SK-N-SH (cell line): ENCODE measurements at regions of chr2 and their contacts with region 1.

Region 1: DNA sequence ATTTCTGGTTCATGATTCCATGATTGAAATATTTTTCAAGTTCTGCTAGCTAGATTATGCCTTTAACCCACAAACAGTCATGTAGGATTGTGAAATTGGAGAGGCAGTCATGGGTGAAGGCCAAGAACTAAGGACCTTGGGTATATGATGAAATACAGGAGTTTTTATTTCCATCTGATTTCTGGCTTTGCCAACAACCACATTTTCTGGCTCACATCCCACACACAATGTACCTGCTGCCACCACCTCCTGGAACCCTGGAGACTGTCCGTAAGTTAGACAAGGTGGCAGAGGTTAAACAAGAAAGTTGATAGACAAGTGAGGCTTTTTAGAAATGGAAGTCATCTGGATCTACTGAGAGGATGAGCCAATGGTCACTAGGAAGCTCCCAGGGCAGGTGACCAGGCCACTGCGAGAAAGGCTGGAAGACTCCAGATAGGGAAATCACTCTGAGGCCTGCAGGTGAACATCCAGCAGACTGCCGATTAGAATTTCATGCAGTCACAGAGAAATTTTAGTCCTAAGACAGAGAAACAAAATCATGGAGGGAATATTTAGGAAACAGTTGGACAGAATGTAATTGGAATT is 402.0 kb downstream of the ALK start:
- DNase-seq: no peak
- H3K4me3 ChIP-seq: no peak overlapping the region
- H3K27ac ChIP-seq: peak overlapping the region in 1 of 2 experiments; percentile 100; a peak in 2 of 4 replicates
- H3K4me1 ChIP-seq: peaks cover 9 to 69% of the 10 kb centered on the region in 2 experiments; a peak in 2 of 4 replicates
- H3K27me3 ChIP-seq: no peaks in the 10 kb centered on the region
- CTCF ChIP-seq: no peak
- EP300 ChIP-seq: no peak
- RAD21 ChIP-seq: no peak

Region 2: DNA sequence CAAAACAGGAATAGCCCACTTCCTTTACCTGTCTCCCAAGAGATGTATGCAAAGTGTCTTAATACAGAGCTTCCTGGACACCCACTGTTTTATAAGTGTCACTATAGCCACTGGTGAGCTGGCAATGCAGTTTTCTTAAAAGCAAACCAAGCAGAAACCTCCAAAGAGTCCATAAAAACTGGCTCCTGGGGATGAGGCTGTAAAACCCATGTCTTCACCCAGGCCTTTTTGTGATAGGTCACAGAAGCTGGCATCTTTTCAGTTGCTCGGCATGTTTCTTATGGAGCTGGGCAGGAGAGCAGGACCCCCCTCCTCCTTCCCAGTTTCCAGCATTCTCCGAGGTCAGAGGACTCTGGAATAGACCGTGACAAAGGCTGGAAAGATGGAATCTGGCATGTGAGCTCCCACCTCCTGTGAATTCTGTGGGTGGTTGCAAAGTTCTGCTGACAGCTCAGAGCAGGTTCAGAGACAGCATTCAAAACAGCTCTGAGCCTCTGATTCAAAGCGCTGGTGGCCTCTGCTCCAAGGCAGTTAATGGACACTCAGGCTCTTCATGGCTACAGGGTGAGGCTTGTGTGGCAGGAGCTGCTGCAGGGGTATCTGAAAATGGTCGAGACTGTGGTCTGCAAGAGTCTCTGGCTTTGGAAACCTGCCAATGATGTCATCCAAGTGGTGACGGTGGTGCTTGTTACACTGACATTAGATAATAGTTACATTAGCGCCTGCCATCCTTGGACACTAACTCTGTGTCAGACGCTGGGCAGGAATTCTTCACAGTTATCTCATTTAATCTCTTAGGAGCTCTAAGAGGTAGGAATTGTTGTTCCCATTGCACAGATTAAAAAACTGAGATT is 120.8 kb before region 1 on chr2:
- CTCF ChIA-PET with region 1: interaction called, 3 read pairs
- POLR2A ChIA-PET with region 1: interaction called, 12 read pairs
- DNase-seq: peak; percentile 71
- H3K4me3 ChIP-seq: no peak overlapping the region
- H3K27ac ChIP-seq: peak overlapping the region in 1 of 2 experiments; percentile 93; a peak in 2 of 4 replicates
- H3K4me1 ChIP-seq: peaks cover 0 to 66% of the 10 kb centered on the region in 2 experiments; a peak in 2 of 4 replicates
- H3K27me3 ChIP-seq: no peaks in the 10 kb centered on the region
- CTCF ChIP-seq: no peak
- EP300 ChIP-seq: peak in 1 of 2 experiments; percentile 64; a peak in 1 of 4 replicates
- RAD21 ChIP-seq: peak; percentile 10

Region 3: GRCh38 chr2:29576231-29576630 is 56.8 kb after region 1 on chr2:
- CTCF ChIA-PET with region 1: interaction called, 23 read pairs
- POLR2A ChIA-PET with region 1: interaction called, 26 read pairs
- DNase-seq: no peak
- H3K4me3 ChIP-seq: no peak overlapping the region
- H3K27ac ChIP-seq: peak overlapping the region in 1 of 2 experiments; percentile 100; a peak in 2 of 4 replicates
- H3K4me1 ChIP-seq: peaks cover 9 to 90% of the 10 kb centered on the region in 2 experiments; a peak in 2 of 4 replicates
- H3K27me3 ChIP-seq: peaks cover 28% of the 10 kb centered on the region; the same call in 1 of the 2 replicates
- CTCF ChIP-seq: no peak
- EP300 ChIP-seq: no peak
- RAD21 ChIP-seq: peak; percentile 0; the same call in 1 of the 2 replicates

Region 4: DNA sequence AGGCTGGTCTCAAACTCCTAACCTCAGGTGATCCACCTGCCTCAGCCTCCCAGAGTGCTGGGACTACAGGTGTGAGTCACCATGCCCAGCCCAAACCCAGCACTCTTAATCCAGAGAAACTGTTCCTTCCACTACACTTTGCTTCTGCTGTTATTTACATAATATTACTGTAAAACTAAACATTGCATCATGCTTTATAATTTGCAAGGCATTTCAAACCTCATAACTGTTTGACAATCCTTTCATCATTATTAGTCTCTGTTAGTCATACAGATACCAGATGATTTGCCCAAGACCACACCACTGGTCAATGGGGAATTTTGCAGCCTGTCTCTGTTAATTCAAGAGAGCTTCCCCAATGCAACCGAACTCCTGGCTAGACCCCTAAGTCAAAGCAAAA is 63.7 kb after region 1 on chr2:
- CTCF ChIA-PET with region 1: interaction called, 23 read pairs
- POLR2A ChIA-PET with region 1: interaction called, 26 read pairs
- DNase-seq: no peak
- H3K4me3 ChIP-seq: no peak overlapping the region; a peak in 1 of 4 replicates
- H3K27ac ChIP-seq: peak overlapping the region in 1 of 2 experiments; percentile 100; a peak in 2 of 4 replicates
- H3K4me1 ChIP-seq: peaks cover 9 to 80% of the 10 kb centered on the region in 2 experiments; a peak in 2 of 4 replicates
- H3K27me3 ChIP-seq: peaks cover 16% of the 10 kb centered on the region; the same call in 1 of the 2 replicates
- CTCF ChIP-seq: no peak
- EP300 ChIP-seq: no peak
- RAD21 ChIP-seq: no peak

Region 5: GRCh38 chr2:29611850-29612249 is 92.4 kb after region 1 on chr2:
- CTCF ChIA-PET with region 1: interaction called, 3 read pairs
- POLR2A ChIA-PET with region 1: interaction called, 12 read pairs
- DNase-seq: no peak
- H3K4me3 ChIP-seq: no peak overlapping the region
- H3K27ac ChIP-seq: peak overlapping the region in 1 of 2 experiments; percentile 99; a peak in 2 of 4 replicates
- H3K4me1 ChIP-seq: peaks cover 0 to 80% of the 10 kb centered on the region in 2 experiments; a peak in 2 of 4 replicates
- H3K27me3 ChIP-seq: no peaks in the 10 kb centered on the region
- CTCF ChIP-seq: no peak
- EP300 ChIP-seq: no peak
- RAD21 ChIP-seq: no peak

Region 6: GRCh38 chr2:29650631-29651097 is 131.2 kb after region 1 on chr2:
- CTCF ChIA-PET with region 1: no interaction called
- POLR2A ChIA-PET with region 1: interaction called, 22 read pairs
- DNase-seq: peak; percentile 74
- H3K4me3 ChIP-seq: no peak overlapping the region
- H3K27ac ChIP-seq: peak overlapping the region in 1 of 2 experiments; percentile 99; a peak in 2 of 4 replicates
- H3K4me1 ChIP-seq: peaks cover 0 to 41% of the 10 kb centered on the region in 2 experiments; a peak in 2 of 4 replicates
- H3K27me3 ChIP-seq: no peaks in the 10 kb centered on the region
- CTCF ChIP-seq: no peak
- EP300 ChIP-seq: peak; percentile 59 to 100; a peak in 2 of 4 replicates
- RAD21 ChIP-seq: peak; percentile 49

Region 7: GRCh38 chr2:29744976-29745375 is 225.5 kb after region 1 on chr2:
- CTCF ChIA-PET with region 1: no interaction called
- POLR2A ChIA-PET with region 1: no interaction called
- DNase-seq: no peak
- H3K4me3 ChIP-seq: no peak overlapping the region
- H3K27ac ChIP-seq: no peak overlapping the region; a peak in 1 of 4 replicates
- H3K4me1 ChIP-seq: peaks cover 0 to 25% of the 10 kb centered on the region in 2 experiments; a peak in 1 of 4 replicates
- H3K27me3 ChIP-seq: no peaks in the 10 kb centered on the region
- CTCF ChIP-seq: no peak
- EP300 ChIP-seq: no peak
- RAD21 ChIP-seq: no peak

Region 8: GRCh38 chr2:29817801-29818680 is 298.6 kb after region 1 on chr2:
- CTCF ChIA-PET with region 1: no interaction called
- POLR2A ChIA-PET with region 1: no interaction called
- DNase-seq: no peak
- H3K4me3 ChIP-seq: no peak overlapping the region
- H3K27ac ChIP-seq: peak overlapping the region in 1 of 2 experiments; percentile 82; a peak in 2 of 4 replicates
- H3K4me1 ChIP-seq: peaks cover 0 to 55% of the 10 kb centered on the region in 2 experiments; a peak in 3 of 4 replicates
- H3K27me3 ChIP-seq: peaks cover 11% of the 10 kb centered on the region
- CTCF ChIP-seq: no peak
- EP300 ChIP-seq: no peak
- RAD21 ChIP-seq: no peak